ENCODE measurements at regions of chr21 and their contacts with region 1.

Region 1: DNA sequence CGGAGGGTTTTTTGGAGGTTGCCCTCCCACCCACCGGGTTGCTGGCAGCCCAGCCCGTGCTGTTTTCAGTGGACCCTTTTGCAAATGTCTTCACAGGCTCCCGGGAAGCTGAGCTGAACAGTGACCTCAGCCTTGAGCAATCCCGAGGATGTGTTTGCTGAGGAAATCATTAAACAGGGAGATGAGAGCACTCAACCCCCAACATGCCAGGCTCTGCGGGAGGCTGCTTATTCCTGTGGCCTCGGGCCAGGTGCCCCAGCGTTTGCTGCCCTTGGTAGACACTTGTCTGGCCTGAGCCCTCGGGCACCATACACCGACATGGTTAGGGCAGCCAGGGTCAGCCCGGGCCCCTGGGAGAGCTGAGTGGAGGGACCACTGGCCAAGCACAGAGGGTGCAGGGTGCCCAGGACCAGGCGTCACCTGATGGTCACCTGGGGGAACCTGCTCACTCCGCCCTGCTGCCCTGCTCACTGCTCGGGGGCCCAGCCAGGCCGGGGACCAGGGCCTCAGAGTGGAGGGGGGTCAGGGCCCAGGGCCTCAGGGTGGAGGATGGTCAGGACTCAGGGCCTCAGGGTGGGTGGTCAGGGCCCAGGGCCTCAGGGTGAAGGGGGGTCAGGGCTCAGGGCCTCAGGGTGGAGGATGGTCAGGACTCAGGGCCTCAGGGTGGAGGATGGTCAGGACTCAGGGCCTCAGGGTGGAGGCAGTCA is 42.5 kb upstream of the POFUT2 start:
- DNase-seq: peak; percentile 29
- H3K4me3 ChIP-seq: no peak overlapping the region
- H3K27ac ChIP-seq: no peak overlapping the region
- H3K4me1 ChIP-seq: peaks cover 33% of the 10 kb centered on the region
- H3K27me3 ChIP-seq: peaks cover 2% of the 10 kb centered on the region
- CTCF ChIP-seq: no peak

Region 2: GRCh38 chr21:44865561-44866280 is 464.5 kb before region 1 on chr21:
- CTCF ChIA-PET with region 1: no interaction called
- dilution Hi-C with region 1: no loop called
- in situ Hi-C with region 1: no loop called
- intact Hi-C with region 1: no loop called
- DNase-seq: no peak
- H3K4me3 ChIP-seq: no peak overlapping the region
- H3K27ac ChIP-seq: no peak overlapping the region
- H3K4me1 ChIP-seq: peaks cover 46% of the 10 kb centered on the region
- H3K27me3 ChIP-seq: no peaks in the 10 kb centered on the region
- CTCF ChIP-seq: no peak

Region 3: DNA sequence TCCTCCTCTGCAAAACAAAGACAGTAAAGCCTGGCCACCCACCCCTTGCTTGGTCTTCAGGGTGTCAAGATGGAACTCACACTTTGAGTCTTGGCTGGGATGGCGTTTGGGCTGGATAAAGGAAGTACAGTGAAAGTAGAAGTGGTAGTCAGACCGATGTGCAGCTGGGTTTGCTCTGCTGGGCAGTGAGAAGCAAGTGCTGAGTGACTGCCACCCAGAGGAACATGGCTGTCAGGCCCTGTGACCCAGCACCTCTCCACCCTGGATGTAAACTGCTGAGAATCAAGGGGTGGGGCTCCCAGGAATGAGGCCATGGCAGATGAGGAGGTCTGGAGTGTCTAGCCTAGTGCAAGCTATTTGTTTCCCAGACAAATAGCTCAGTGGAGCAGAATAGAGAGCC is 93.7 kb before region 1 on chr21:
- CTCF ChIA-PET with region 1: no interaction called
- dilution Hi-C with region 1: loop called (anchors 5 kb)
- in situ Hi-C with region 1: no loop called
- intact Hi-C with region 1: no loop called
- DNase-seq: no peak
- H3K4me3 ChIP-seq: no peak overlapping the region
- H3K27ac ChIP-seq: no peak overlapping the region
- H3K4me1 ChIP-seq: no peaks in the 10 kb centered on the region
- H3K27me3 ChIP-seq: peaks cover 16% of the 10 kb centered on the region
- CTCF ChIP-seq: peak in 1 of 2 donors; percentile 19

Region 4: GRCh38 chr21:45372732-45373355 is 42.6 kb after region 1 on chr21:
- CTCF ChIA-PET with region 1: no interaction called
- dilution Hi-C with region 1: loop called (anchors 5 kb)
- in situ Hi-C with region 1: no loop called
- intact Hi-C with region 1: no loop called
- DNase-seq: peak; percentile 89
- H3K4me3 ChIP-seq: no peak overlapping the region
- H3K27ac ChIP-seq: peak overlapping the region; percentile 19
- H3K4me1 ChIP-seq: peaks cover 18% of the 10 kb centered on the region
- H3K27me3 ChIP-seq: no peaks in the 10 kb centered on the region
- CTCF ChIP-seq: no peak

Region 5: DNA sequence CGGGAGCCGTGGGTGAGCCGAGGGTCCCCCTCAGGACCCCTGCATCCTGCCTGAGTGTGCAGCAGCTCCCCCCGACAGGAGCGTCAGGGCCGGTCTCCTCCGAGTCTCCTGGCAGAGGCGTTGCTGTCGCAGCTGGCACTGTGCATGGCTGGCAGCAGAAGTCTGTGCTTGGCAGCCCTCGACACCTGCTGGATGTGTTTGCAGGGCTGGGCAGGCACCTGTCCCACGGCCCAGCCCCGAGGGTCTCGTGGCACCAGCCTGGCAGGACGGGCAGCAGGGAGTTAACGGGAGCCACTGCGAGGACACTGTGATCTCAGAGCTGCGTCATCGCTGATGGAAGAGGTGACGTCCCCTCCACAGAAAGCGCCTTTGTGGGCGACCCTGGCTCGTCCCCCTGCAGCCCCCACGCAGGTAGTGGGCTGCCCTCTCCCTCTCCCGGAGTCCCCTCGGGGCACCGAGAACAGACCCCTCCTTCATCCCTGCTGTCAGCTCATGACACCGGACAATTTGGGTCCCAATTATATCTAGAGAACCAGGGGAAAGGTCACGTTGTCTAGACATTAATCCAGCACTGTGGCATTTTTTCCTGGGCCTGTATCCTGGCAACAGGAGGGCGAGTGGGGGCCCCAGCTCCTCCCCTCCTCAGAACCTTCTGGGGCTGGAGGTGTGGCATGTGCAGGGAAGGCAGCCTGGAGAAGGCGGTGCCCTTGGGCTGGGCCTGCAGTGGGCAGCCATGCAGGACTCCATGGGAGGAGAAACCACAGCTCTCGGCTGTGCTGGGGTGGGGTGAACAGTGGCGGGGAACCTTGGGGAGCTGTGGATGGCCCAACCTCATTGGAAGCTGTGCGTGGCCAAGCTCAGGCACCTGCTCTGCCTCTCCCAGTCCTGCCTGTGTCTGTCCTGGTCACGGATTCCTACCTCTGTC is 90.1 kb after region 1 on chr21:
- CTCF ChIA-PET with region 1: no interaction called
- dilution Hi-C with region 1: loop called (anchors 5 kb)
- in situ Hi-C with region 1: no loop called
- intact Hi-C with region 1: no loop called
- DNase-seq: no peak
- H3K4me3 ChIP-seq: no peak overlapping the region
- H3K27ac ChIP-seq: no peak overlapping the region
- H3K4me1 ChIP-seq: peaks cover 12% of the 10 kb centered on the region
- H3K27me3 ChIP-seq: no peaks in the 10 kb centered on the region
- CTCF ChIP-seq: no peak

Region 6: DNA sequence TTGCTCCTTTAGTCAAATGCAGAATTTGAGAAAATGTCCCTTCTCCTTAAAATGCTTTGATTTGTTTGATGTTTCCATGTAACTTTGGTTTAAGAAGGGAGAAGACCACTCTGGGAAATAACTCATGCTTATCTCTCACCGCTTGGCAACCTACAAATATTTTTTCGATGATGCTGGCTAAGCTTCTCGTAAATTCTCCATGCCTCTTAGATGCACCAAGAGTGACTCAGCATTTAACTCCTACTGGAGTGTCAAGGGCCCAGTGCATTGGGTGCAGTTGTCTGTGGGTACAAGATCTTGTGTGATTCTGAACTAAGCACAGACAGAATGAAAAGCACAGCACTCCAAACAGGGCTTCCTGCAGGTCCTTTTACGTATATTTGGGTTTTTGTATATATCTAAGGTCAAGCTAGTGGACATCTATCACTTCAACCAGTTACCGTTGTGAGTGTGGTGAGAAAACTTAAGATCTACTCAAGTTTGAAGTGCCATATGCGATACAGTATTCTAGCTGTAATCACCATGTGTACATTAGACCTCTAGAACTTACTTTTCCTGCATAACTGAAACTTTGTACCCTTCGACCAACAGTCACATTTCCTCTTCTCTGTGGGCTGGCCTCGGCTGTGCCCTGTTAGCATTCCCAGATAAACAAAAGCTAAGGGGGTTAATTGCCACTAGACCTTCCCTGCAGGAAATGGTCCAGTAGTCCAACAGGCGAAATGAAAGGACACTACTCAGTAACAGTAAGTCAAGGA is 130.6 kb after region 1 on chr21:
- CTCF ChIA-PET with region 1: no interaction called
- dilution Hi-C with region 1: loop called (anchors 5 kb)
- in situ Hi-C with region 1: no loop called
- intact Hi-C with region 1: no loop called
- DNase-seq: peak; percentile 31
- H3K4me3 ChIP-seq: no peak overlapping the region
- H3K27ac ChIP-seq: no peak overlapping the region
- H3K4me1 ChIP-seq: peaks cover 2% of the 10 kb centered on the region
- H3K27me3 ChIP-seq: no peaks in the 10 kb centered on the region
- CTCF ChIP-seq: no peak

Region 7: DNA sequence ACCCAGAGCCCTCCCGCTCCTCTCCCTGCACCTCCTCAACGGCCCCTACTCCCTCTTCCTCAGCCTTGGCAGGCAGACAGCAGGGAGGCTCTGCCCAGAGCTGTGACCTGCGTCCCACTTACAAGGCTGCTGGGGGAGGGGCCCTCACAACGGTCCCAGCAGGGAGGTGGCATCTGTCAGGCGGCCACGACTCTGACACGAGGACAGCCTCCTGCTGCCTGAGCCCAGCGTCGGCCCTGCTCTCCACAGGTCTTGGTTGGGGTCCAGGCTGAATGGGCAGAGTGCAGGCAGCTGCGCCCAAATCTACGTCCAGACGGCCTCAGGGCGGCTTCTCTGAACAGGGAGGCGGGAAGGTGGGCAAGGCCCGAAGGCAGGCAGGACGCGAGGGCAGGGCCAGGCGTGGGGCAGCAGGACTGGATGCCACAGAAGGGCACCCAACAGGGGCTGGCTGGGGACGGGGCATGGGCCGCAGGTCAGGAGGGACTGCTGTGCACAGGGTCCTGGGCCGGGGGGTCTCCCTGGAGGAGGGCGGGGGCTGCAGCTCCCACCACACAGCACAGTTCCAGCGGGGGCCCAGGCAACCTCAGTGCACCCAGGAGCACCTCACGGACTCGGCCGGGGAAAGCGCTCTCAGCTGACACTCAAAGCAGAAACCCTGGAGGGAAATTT is 204.6 kb after region 1 on chr21:
- CTCF ChIA-PET with region 1: no interaction called
- dilution Hi-C with region 1: loop called (anchors 5 kb)
- in situ Hi-C with region 1: no loop called
- intact Hi-C with region 1: no loop called
- DNase-seq: no peak
- H3K4me3 ChIP-seq: no peak overlapping the region
- H3K27ac ChIP-seq: no peak overlapping the region
- H3K4me1 ChIP-seq: no peaks in the 10 kb centered on the region
- H3K27me3 ChIP-seq: no peaks in the 10 kb centered on the region
- CTCF ChIP-seq: no peak